MCF 10A (cell line): ENCODE measurements at regions of chr15 and their contacts with region 1.

Region 1: GRCh38 chr15:55407949-55408791 is at the starts of genes CCPG1 and PIERCE2:
- DNase-seq: peak; percentile 88
- H3K4me3 Mint-ChIP-seq: peak within 1 kb of the TSS; percentile 82
- H3K27ac Mint-ChIP-seq: peak within 1 kb of the TSS; percentile 86
- H3K4me1 Mint-ChIP-seq: peaks cover 13% of the 10 kb centered on the region
- H3K27me3 Mint-ChIP-seq: no peaks in the 10 kb centered on the region
- CTCF ChIP-seq: peak; percentile 55
- total RNA-seq, gene CCPG1: 30.4 and 50.1 TPM in 2 replicates
- total RNA-seq, gene PIERCE2: 3.5 and 5.0 TPM in 2 replicates

Region 2: GRCh38 chr15:55221090-55222011 is 186.8 kb before region 1 on chr15:
- CTCF ChIA-PET with region 1: no interaction called
- POLR2A ChIA-PET with region 1: no interaction called
- intact Hi-C with region 1: loop called (anchors 1 kb)
- DNase-seq: peak; percentile 90
- H3K4me3 Mint-ChIP-seq: peak overlapping the region; percentile 34
- H3K27ac Mint-ChIP-seq: peak overlapping the region; percentile 91
- H3K4me1 Mint-ChIP-seq: peaks cover 22% of the 10 kb centered on the region
- H3K27me3 Mint-ChIP-seq: no peaks in the 10 kb centered on the region
- CTCF ChIP-seq: no peak

Region 3: GRCh38 chr15:55290528-55291057 is 117.6 kb before region 1 on chr15:
- CTCF ChIA-PET with region 1: interaction called, 6 read pairs
- POLR2A ChIA-PET with region 1: interaction called, 5 read pairs
- intact Hi-C with region 1: loop called (anchors 1 kb)
- DNase-seq: peak; percentile 84
- H3K4me3 Mint-ChIP-seq: peak overlapping the region; percentile 89
- H3K27ac Mint-ChIP-seq: peak overlapping the region; percentile 92
- H3K4me1 Mint-ChIP-seq: peaks cover 15% of the 10 kb centered on the region
- H3K27me3 Mint-ChIP-seq: no peaks in the 10 kb centered on the region
- CTCF ChIP-seq: peak; percentile 84

Region 4: DNA sequence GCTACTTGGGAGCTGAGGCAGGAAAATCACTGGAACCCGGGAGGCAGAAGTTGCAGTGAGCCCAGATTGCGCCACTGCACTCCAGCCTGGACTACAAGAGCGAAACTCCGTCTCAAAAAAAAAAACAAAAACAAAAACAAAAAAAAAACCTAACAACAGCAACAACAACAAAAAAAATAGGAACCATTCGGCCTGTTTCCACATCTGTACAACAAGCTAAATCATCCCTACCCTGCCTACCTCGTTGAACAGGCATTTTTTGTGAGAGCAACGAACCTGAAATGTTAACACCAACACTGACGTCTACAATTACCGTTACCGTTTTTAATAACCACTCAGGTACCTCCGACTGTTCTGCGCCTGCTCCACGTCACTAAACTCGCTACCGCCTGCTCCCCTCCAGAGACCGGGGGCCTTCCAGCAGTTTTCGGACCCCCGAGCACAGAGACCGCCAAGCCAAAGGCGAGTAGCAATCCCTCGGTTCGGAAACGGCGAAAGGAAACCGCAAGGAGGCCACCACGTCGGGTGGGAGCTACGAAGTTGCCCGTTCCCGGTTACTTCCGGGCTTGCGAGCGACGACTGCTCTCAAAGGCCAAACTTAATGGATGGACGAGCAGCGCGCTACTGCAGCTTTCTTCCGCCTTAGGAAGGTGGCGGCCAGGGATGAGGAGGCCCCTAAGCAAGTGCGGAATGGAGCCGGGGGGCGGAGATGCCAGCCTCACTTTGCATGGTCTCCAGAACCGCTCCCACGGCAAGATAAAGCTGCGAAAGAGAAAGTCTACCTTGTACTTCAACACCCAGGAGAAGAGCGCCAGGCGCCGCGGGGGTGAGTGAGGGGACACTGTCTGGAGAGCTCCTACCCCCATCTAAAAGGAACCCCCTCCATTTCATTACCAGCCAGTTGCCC is 89.3 kb before region 1 on chr15 and contains the starts of genes PIGB and PIGBOS1:
- CTCF ChIA-PET with region 1: interaction called, 12 read pairs
- POLR2A ChIA-PET with region 1: interaction called, 18 read pairs
- intact Hi-C with region 1: loop called (anchors 1 kb)
- DNase-seq: peak; percentile 86
- H3K4me3 Mint-ChIP-seq: peak within 1 kb of the TSS; percentile 93
- H3K27ac Mint-ChIP-seq: peak within 1 kb of the TSS; percentile 98
- H3K4me1 Mint-ChIP-seq: peaks cover 15% of the 10 kb centered on the region
- H3K27me3 Mint-ChIP-seq: no peaks in the 10 kb centered on the region
- CTCF ChIP-seq: no peak
- total RNA-seq, gene PIGB: 16.2 and 22.2 TPM in 2 replicates
- total RNA-seq, gene PIGBOS1: 13.9 and 16.1 TPM in 2 replicates

Region 5: DNA sequence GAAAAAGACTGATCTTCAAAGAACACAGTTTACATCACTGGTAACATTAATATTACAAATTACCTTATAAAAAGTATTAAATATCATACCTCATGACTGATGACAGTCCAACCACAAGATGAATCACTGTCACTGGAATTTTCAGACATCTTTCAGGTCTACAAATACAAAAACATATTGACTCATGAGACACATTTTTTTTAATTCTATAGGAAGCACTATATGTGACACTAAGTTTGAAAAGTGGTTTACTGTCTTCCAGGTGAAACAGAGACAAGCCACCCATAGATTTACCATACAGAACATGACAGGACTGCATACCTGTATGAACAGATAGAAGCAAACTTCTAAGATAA is 18.9 kb before region 1 on chr15:
- CTCF ChIA-PET with region 1: interaction called, 16 read pairs
- POLR2A ChIA-PET with region 1: interaction called, 11 read pairs
- intact Hi-C with region 1: loop called (anchors 2 kb)
- DNase-seq: peak; percentile 45
- H3K4me3 Mint-ChIP-seq: no peak overlapping the region
- H3K27ac Mint-ChIP-seq: peak overlapping the region; percentile 75
- H3K4me1 Mint-ChIP-seq: peaks cover 14% of the 10 kb centered on the region
- H3K27me3 Mint-ChIP-seq: no peaks in the 10 kb centered on the region
- CTCF ChIP-seq: no peak